B cell (primary cell): ENCODE measurements at regions of chr1 and their contacts with region 1.

Region 1: DNA sequence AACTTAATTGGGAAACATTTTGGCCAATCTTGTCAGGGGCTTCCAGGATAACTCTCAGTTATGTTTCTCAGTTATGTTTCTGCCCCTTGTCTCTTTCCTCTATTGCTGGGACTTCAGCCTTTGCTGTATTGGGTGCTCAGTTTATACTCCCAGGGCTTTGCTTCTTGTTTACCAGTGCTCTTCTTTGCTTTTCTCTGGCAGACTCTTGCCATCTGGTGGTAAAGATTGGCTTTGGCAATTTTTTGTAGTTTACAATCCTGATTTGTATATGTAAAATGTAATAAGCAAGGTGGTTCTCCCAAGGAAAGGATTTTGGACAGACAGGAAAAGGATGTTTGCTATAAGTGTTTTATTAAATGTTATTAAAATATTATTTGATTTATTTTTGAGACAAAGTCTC is 37.9 kb downstream of the FABP3 start:
- DNase-seq: peak; percentile 12
- ATAC-seq: no peak
- H3K4me3 ChIP-seq: no peak overlapping the region
- H3K4me3 Mint-ChIP-seq: no peak overlapping the region
- H3K27ac ChIP-seq: no peak overlapping the region
- H3K27ac Mint-ChIP-seq: no peak overlapping the region
- H3K4me1 ChIP-seq: peaks cover 0 to 2% of the 10 kb centered on the region in 2 donors
- H3K4me1 Mint-ChIP-seq: peaks cover 9% of the 10 kb centered on the region
- H3K27me3 ChIP-seq: no peaks in the 10 kb centered on the region
- H3K27me3 Mint-ChIP-seq: no peaks in the 10 kb centered on the region
- CTCF ChIP-seq: peak; percentile 32

Region 2: DNA sequence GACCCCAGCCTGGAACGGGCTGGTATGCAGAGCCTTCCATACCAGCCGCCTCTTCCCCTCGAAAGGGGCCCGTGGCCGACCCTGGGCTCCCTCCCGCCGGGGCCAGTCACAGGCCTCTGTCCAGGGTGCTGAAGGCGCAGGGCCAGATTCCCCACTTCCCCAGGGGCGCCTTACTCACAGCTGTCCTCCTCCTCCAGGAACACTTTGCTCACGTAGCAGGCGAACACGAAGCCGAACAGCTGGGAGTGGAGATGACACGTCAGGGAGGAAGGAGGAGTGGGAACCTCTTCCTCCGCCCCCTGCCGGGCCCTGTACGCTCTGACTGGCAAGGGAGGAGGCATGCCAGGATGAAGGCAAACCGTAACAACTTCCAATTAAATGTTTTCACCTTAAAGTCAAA is 152.7 kb before region 1 on chr1:
- CTCF ChIA-PET with region 1: interaction called, 3 read pairs
- POLR2A ChIA-PET with region 1: no interaction called
- intact Hi-C with region 1: loop called (anchors 10 kb)
- DNase-seq: peak; percentile 61
- ATAC-seq: peak; percentile 52
- H3K4me3 ChIP-seq: no peak overlapping the region
- H3K4me3 Mint-ChIP-seq: peak overlapping the region; percentile 34
- H3K27ac ChIP-seq: no peak overlapping the region
- H3K27ac Mint-ChIP-seq: no peak overlapping the region
- H3K4me1 ChIP-seq: peaks cover 10 to 15% of the 10 kb centered on the region in 2 donors
- H3K4me1 Mint-ChIP-seq: peaks cover 6% of the 10 kb centered on the region
- H3K27me3 ChIP-seq: peaks cover 0 to 44% (median 14%) of the 10 kb centered on the region in 4 experiments
- H3K27me3 Mint-ChIP-seq: peaks cover 54% of the 10 kb centered on the region
- CTCF ChIP-seq: no peak